Ascending aorta (tissue), 2 donors: ENCODE measurements at regions of chr1 and their contacts with region 1.

Region 1: GRCh38 chr1:226679853-226680516 is 59.1 kb downstream of the ITPKB start:
- DNase-seq: peak in 1 of 2 donors; percentile 95
- H3K4me3 ChIP-seq: peak overlapping the region; percentile 25 to 63
- H3K27ac ChIP-seq: peak overlapping the region; percentile 85 to 91
- H3K4me1 ChIP-seq: peaks cover 13 to 34% of the 10 kb centered on the region in 2 donors
- H3K27me3 ChIP-seq: no peaks in the 10 kb centered on the region
- CTCF ChIP-seq: no peak

Region 2: GRCh38 chr1:226656601-226657277 is 23.2 kb before region 1 on chr1:
- intact Hi-C with region 1: loop called (anchors 1 kb)
- DNase-seq: peak in 1 of 2 donors; percentile 89
- H3K4me3 ChIP-seq: no peak overlapping the region
- H3K27ac ChIP-seq: peak overlapping the region; percentile 74 to 77
- H3K4me1 ChIP-seq: peaks cover 29 to 68% of the 10 kb centered on the region in 2 donors
- H3K27me3 ChIP-seq: no peaks in the 10 kb centered on the region
- CTCF ChIP-seq: no peak

Region 3: DNA sequence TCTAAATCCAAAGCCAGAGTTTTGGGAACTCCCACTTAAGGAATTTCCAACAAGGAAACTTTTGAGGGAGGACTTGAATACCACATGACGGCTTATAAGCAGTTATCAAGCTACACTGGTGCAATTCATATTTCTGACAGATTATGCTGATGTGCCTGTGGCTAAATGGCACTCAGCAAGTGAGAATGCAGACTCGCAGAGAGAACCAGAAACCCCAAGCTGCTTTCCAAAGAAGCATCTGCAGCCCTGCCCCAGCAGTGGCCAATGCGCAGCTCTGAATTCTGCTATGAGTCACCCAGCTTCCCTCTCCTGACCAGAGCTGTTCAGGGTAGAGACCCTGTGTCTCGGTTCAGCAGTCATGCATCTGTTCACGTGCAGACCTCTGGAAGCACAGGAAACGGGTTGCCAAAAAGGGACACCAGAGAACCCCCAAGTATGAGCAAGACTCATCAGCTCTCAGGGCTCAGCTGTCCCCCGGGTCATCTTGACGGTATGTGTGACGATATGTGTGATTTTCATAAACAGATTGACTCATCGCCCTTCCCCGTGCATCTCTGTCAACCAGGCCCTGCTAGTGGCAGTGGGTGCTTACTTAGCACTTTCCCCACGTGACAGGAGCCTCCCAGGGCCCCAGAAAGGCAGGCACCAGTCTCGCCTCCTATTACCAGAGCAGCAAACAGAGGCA is 17.2 kb before region 1 on chr1:
- intact Hi-C with region 1: loop called (anchors 1 kb)
- DNase-seq: peak; percentile 92 to 95
- H3K4me3 ChIP-seq: peak overlapping the region in 1 of 2 donors; percentile 32
- H3K27ac ChIP-seq: peak overlapping the region; percentile 91 to 95
- H3K4me1 ChIP-seq: peaks cover 46 to 82% of the 10 kb centered on the region in 2 donors
- H3K27me3 ChIP-seq: no peaks in the 10 kb centered on the region
- CTCF ChIP-seq: no peak

Region 4: GRCh38 chr1:226702957-226703831 is 23.2 kb after region 1 on chr1:
- intact Hi-C with region 1: loop called (anchors 2 kb)
- DNase-seq: peak in 1 of 2 donors; percentile 84
- H3K4me3 ChIP-seq: peak overlapping the region; percentile 61 to 85
- H3K27ac ChIP-seq: peak overlapping the region; percentile 96 to 98
- H3K4me1 ChIP-seq: peaks cover 0 to 8% of the 10 kb centered on the region in 2 donors
- H3K27me3 ChIP-seq: no peaks in the 10 kb centered on the region
- CTCF ChIP-seq: no peak